Left cardiac atrium (tissue), 4 donors: ENCODE measurements at regions of chr12 and their contacts with region 1.

Region 1: DNA sequence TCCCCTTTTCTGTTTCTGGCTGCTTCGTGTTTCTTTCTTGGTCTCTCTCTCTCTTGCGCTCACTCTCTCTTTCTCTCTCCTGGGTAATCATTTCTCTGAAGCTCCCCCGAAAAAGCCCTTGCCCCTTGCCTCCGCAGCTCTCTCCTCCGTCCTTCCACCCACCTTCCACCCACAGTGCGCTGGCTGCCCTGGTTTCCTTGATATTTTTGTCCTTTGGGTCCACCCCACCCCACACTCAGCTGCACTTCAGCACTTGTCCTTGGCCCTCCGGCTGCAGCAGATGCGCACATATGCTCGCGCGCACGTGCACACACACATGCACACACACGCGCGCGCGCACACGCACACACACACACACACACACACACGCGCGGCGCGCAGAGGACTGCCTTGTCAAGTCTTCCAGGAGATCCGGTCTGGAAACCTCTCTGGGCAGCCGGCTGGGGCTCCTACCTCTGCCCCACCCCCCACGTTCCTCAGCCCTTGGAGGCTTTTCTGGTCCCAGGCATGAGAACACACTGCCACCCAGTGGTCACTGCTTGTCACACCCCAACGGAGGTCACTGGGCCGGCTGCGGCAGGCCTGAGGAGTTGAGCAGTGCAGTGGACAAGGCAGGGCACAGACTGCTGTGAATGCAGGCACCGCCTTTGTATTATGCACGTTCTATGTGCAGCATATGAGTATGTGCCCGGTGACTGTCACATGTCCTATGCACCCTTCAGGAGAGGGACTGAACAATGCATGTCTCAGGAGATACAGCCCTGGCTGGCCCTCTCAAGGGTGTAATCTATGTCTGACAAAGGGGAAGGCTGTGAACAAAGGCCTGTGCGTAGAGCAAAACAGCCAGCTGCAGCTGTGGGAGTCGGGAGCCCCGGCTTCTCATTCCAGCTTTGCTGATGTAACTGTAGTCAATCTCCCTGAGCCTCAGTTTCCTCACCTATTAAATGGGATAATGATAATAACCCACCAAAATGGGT is 6.5 kb downstream of the LAG3 start:
- DNase-seq: peak; percentile 95
- ATAC-seq: peak; percentile 95 to 96

Region 2: DNA sequence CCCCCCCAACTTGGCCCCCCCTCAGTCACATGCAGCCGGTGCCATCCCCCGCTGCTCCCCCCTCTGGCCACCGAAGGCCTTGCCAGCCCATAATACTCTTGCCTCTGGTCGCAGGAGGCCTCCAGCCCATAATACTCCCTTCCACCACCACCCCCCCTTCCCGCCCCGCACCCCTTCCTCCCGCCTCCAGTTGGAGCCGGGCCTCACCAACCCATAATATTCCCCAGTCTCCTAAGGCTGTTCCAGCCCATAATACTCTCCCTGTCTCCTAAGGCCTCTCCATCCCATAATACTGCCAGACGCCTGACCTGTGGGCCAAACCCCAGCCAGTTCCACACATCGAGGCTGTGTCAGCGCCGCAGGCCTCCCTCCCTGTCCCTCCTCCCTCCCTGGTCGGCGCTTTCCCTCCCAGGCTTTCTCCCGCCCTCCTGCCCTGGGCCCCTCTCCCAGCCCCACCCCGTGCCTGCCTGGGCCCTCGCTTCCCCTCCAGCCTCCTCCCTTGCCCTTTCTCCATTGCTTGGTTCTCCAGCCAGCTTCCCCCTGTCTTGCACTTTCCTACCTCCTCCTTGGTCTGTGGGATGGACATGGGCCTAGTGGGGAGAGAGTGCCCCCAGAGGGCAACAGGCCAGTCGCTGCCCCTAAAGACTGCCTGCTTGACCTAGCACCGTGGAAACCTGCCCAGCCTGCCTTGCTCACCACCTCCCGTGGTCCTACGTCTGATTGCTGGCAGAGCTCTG is 164.9 kb before region 1 on chr12:
- intact Hi-C with region 1: loop called in 1 of 2 experiments (anchors 5 kb)
- DNase-seq: peak; percentile 91
- ATAC-seq: peak; percentile 88 to 92

Region 3: DNA sequence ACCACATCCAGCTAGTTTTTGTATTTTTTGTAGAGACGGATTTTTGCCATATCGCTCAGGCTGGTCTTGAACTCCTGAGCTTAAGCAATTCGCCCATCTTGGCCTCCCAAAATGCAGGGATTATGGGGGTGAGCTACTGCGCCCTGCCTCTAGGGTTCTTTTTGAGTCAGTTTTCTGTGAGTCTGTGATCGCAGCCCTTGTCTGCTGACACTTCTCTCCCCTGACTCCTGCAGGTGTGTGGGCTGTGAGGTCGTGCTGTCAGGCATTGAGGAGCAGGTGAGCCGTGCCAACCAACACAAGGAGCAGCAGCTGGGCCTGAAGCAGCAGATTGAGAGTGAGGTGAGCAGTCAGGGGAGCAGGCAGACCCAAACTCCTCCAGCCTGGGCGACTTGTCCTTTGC is 48.7 kb before region 1 on chr12:
- intact Hi-C with region 1: loop called (anchors 5 kb)
- DNase-seq: no peak
- ATAC-seq: no peak

Region 4: DNA sequence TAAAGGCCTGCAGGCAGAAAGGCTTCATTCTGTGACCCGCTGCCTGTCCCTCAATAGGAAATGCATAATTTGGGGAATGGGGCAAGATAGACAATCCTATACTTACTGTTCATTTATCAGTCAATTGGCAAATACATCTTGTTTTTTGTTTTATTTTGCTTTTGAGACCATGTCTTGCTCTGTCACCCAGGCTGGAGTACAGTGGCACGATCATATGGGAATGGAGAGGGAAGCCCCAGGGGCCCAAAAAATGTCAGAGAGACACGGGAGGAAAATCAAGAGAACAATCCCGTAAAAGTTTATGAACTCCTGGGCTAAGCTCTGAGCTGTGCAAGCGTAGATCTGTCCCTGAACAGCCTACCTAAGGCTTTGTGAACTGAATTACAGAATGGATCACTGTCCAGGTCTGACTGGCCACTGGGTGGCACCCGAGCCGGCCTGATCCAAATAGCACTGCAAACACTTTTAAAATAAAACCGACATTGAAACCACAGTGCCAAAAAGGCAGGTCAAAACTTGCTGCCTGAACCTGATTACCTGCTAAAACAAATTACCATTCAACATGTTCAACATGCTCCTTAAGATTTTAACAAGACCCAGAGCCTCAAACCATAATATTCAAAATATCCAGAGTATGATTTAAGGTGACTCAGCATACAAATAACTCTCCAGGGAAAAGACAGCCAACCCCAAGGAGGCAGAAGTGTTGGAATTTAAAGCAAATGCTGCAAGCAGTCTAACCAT is 43.2 kb before region 1 on chr12:
- intact Hi-C with region 1: loop called (anchors 5 kb)
- DNase-seq: peak; percentile 71
- ATAC-seq: peak; percentile 90 to 93

Region 5: DNA sequence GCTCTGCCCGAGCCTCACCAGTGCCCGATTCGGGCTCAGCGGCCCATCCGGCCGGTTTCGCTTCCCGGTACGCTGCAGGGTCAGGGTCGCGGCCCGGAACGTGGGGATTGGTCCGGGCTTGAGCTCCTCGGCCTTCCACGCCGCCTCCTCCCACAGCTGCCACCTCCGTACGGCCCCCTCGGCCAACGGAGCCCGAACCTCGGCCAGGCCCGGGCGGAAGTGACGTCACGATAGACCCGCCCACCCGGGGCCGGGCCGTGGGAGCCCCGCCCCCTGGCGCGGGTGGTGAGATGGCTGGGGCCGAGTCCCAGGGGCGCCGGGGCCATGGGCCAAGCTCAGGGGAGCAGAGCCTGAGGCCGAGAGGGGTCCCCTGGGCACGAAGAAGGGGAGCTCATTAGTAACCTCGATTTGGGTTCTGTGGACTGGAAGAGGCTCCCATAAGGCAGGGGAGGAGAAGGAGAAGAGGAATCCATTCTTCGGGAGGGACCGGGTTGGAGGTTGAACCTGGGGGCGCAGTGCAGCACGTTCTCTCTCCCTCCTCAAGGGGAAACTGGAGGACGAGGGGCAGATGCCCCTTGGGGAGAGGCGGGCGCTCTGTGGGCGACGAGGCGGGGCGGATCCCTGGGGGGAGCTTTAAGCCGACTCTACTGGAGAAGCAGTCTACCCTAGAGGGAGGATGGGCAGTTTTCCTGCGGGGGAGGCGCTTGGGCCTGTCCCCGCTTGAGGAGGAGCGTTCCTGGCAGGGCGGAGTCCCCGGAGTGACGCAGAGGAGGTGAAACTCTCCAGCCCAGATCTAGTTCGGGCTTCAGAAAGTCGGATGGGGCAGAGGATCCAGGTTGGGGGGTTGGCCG is 25.7 kb before region 1 on chr12 and contains the start of gene MLF2:
- intact Hi-C with region 1: loop called in 1 of 2 experiments (anchors 1 kb)
- DNase-seq: peak; percentile 99
- ATAC-seq: peak; percentile 95 to 96
- total RNA-seq, gene MLF2: 118 to 149 TPM

Region 6: DNA sequence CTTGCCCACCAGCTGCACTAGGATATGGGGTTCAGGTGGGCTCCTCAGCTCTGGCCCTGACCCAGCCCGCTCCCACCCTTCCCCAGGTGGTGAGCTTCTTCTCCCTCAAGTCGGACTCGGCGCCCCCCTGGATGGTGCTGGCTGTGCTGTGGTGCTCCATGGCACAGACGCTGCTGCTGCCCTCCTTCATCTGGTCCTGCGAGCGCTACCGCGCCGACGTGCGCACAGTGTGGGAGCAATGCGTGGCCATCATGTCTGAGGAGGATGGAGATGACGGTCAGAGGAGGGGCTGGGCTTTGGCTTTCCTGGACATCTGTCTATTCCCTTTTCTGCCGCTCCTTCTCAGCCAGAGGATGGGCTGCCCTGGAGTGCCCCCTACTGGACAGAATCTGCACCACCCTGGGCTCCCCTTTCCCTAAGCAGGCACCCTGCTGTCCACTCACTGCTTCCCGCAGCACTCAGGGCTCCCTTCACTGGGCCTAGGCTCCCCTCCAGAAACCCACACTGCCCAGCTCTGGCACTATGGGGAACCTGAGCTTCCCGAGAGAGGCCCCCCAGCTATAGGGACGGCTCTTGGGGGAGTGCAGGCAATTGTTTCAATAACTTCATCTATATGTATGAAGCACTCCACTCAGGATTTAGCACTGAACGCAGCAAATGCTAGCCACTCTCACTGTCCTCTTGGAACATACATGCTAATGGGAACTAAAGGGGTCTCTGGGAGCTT is 46.7 kb after region 1 on chr12:
- intact Hi-C with region 1: no loop called
- DNase-seq: peak; percentile 85
- ATAC-seq: peak; percentile 53 to 58